ENCODE measurements at regions of chr9 and their contacts with region 1.

Region 1: DNA sequence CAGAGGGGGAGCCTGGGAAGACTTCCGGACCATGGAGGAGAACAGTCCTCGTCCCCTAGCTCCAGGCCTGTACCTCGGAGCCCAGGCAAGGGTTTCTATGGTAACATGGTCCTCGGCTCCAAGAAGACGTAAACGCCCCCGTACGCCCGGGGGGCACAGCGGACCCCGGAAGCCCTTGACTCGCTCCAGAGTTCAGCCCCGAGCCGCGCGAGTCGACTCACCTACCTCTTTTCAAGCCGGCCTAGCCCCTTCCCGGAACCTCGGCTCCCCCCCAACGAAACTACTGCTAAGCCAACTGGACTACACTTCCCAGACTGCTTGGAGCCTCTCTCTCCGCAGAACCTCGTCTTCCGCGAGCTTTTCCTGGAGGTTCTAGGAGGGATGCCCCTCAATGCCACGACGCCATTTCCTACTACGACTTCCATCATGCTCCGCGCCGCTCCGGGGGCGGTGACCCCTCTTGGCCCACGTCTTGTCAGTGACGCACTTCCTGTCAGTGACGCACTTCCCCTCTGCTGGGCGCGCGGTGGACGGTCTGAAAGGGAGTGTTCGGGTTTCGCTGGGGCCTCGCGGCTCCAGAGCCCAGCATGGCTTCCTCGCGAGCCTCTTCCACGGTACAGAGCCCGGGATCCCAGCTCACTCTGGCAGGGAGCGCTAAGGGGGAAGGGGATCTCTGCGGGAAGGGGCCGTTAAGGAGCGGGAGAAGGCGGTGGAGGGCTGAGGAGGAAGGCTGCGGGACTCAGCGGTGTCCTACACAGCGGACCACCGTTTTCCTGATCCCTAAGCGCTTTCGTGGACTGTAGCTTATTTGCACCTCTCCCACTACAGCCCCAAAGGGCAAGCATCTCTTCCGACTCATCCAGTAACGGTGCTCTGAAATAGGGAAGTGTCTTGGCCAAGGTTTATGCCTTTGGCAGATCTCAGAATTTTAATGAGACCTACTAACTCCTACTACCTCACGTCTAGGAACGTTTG is at the starts of genes CDC26 and PRPF4:
- DNase-seq: peak; percentile 94 to 98 (median 97)
- H3K4me3 ChIP-seq: peak within 1 kb of the TSS; percentile 61 to 100 (median 88)
- H3K27ac ChIP-seq: peak within 1 kb of the TSS; percentile 66 to 99 (median 93)
- H3K27me3 ChIP-seq: no peaks in the 10 kb centered on the region
- CTCF ChIP-seq: peak in 29 of 56 donors; percentile 4 to 58 (median 40)
- total RNA-seq, gene CDC26: 12.2 to 29.9 (median 18.8) TPM
- total RNA-seq, gene PRPF4: 10.2 to 24.7 (median 17.8) TPM

Region 2: GRCh38 chr9:113150670-113151611 is 124.5 kb before region 1 on chr9 and contains the start of gene SLC31A2:
- intact Hi-C with region 1: loop called (anchors 5 to 10 kb)
- DNase-seq: peak; percentile 88 to 95 (median 93)
- H3K4me3 ChIP-seq: peak within 1 kb of the TSS; percentile 77 to 100 (median 96)
- H3K27ac ChIP-seq: peak within 1 kb of the TSS; percentile 52 to 100 (median 97)
- H3K27me3 ChIP-seq: no peaks in the 10 kb centered on the region
- CTCF ChIP-seq: peak in 55 of 56 donors; percentile 27 to 73 (median 56)
- total RNA-seq, gene SLC31A2: 10.6 to 211 (median 43.4) TPM

Region 3: DNA sequence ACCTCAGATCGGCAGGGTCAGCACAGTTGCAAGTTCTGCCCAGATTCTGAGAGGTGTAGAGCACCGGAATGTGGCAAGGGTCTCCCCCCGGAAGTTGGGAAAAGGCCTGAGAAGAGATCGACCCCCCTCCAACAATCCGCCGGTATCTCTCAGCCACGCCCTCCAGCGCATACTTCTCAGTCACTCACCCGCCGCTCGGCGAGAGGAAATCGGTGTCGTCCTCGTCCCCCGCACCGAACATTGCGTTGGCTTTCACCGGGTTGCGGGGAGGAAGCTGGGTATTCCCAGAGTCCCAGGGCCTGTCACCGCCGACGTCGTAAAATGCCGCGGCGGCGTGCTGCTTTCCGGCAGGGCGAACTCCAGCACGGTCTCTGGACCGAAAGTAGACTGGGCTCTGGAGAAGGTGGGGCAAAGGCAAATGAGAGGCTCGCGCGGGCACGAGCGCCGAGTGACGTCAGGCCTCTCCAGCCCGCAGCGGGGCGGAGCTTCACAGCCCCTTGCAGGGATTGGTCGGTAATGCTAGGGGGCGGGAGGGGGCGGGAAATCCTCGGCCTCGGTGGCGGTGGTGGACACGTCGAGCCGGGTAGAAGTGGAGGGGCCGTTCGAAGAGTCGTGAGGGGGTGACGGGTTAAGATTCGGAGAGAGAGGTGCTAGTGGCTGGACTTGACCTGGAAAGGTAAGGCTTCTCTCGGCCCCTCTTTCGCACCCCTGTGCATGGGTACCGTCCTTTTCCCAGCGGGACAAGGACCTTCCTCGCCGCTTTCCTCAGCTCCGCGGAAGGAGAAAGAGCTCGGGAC is 54.2 kb before region 1 on chr9 and contains the starts of genes FKBP15 and SLC31A1:
- intact Hi-C with region 1: loop called (anchors 1 to 2 kb)
- DNase-seq: peak; percentile 97 to 99 (median 99)
- H3K4me3 ChIP-seq: peak within 1 kb of the TSS; percentile 61 to 99 (median 85)
- H3K27ac ChIP-seq: peak within 1 kb of the TSS in 55 of 59 donors; percentile 45 to 96 (median 87)
- H3K27me3 ChIP-seq: no peaks in the 10 kb centered on the region
- CTCF ChIP-seq: peak in 40 of 56 donors; percentile 7 to 64 (median 30)
- total RNA-seq, gene FKBP15: 23.3 to 39.3 (median 31.2) TPM
- total RNA-seq, gene SLC31A1: 9.4 to 18.3 (median 13.9) TPM

Region 4: DNA sequence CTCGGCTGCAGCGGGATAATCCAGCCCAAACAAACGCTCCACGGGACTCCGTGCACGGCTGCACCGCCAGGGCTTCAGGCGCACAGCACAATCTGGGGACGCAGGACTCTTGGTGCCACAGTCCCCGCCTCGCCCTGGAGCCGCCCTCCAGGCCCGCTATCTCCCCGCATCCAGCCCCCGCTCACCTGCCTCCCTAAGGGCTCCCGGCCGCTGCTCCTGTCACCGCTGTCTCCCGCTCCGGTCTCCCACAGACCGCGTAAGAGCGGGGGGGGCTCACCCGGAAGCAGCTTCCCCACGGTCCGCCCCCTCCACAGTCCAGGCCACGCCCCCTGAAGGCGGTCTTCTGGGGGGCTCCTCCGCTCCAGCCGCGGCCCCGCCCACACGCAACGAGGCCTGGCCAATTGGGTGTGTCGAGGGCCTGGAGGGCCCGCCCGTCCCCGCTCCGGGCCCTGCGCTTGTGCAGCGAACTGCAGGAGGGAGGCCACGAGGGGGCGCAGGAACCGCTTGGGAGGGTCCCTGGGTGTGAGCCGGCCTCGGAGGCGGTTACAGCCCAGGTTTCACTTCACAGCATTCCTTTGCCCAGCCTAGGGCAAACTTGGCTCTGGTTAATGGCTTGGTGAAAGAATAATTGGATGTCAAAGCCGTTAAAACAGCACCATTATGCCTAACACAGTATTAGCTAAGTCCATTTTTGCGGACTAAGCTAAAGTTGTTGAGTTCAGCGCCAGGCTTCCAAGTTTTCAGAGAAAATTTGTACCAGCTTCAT is 125.8 kb after region 1 on chr9 and contains the start of gene ALAD:
- intact Hi-C with region 1: loop called (anchors 1 kb)
- DNase-seq: peak; percentile 94 to 100 (median 98)
- H3K4me3 ChIP-seq: peak within 1 kb of the TSS; percentile 68 to 99 (median 91)
- H3K27ac ChIP-seq: peak within 1 kb of the TSS; percentile 36 to 97 (median 89)
- H3K27me3 ChIP-seq: no peaks in the 10 kb centered on the region
- CTCF ChIP-seq: peak; percentile 70 to 99 (median 96)
- total RNA-seq, gene ALAD: 67.7 to 134 (median 89.4) TPM

Region 5: DNA sequence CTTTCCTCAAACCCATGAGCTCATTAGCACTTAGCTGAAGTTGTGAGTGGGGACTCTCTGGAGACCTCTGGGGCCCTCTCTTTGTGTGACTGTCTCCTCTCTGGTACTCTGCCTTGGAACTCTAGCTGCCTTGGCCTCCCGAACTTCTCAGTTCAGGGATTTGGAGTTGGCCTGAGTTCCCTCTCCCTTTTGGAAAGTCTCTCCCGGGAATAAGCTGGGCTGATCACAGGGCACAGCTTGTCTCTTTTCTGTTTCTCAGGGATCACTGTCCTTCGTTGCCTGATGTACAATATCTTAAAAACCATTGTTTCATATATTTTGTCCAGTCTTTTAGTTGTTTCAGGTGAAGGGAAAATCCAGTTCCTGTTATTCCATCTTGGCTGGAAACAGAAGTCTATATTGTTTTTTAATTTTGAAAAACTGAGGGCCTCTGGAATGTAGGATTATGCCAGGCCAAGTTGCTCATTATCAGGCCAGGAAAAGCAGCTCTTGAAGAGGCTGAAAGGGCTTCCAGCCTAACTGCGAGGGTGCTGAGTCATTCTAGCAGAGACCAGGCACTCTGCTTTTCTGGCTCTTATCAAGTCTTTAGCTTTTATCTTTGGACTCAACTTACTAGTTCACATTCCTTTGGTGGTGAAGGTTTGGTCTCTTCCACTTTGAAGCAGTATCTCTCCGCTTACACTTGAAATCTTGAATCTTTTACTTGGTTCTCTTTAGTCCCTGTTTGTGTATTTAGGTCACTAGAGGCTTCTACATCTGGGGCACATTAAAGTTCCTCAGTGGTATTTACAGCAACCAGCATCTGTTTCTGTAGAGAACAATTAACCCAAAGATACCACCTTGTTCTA is 179.7 kb after region 1 on chr9:
- intact Hi-C with region 1: no loop called
- DNase-seq: no peak
- H3K4me3 ChIP-seq: no peak overlapping the region
- H3K27ac ChIP-seq: peak overlapping the region in 44 of 59 donors; percentile 1 to 75 (median 46)
- H3K27me3 ChIP-seq: no peaks in the 10 kb centered on the region
- CTCF ChIP-seq: no peak

Region 6: GRCh38 chr9:113591001-113591898 is 315.8 kb after region 1 on chr9:
- intact Hi-C with region 1: loop called in 1 of 2 experiments (anchors 10 kb)
- DNase-seq: peak; percentile 44 to 92 (median 86)
- H3K4me3 ChIP-seq: no peak overlapping the region
- H3K27ac ChIP-seq: peak overlapping the region in 35 of 59 donors; percentile 0 to 69 (median 38)
- H3K27me3 ChIP-seq: no peaks in the 10 kb centered on the region
- CTCF ChIP-seq: peak; percentile 79 to 99 (median 95)

Region 7: DNA sequence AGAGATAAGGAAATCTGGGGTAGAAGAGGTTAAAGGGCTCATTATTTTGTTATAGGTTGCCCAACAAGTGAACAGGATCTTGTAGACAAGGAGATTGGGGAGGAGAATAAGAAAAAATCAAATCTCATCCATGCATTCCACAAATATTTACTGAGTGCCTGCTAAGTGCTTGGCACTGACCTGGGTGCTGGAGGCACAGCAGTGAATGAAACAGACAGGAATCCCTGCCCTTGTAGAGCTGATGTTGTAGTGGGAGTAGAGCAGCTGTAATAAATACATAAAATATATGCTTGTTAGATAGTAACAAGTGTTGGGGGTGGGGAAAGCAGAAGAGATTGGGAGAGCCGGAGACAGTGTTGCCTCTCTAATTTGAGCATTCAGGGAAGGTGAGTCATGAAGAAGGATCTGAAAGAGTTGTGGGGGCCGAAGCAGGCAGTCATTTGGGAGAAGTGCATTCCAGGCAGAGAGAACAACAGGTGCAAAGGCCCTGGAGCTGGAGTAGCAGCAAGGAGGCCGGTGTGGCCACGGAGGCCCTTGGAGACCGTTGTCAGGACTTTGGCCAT is 698.5 kb after region 1 on chr9:
- intact Hi-C with region 1: no loop called
- DNase-seq: no peak
- H3K4me3 ChIP-seq: no peak overlapping the region
- H3K27ac ChIP-seq: no peak overlapping the region
- H3K27me3 ChIP-seq: no peaks in the 10 kb centered on the region
- CTCF ChIP-seq: no peak